Activated T-helper 2 cell treated with anti-CD3 and anti-CD28 coated beads, Interferon-gamma antibody, Interleukin-2, Interleukin-4, amounts not matched to agents 10 μg/mL and 5 μg/mL and 100 μg/mL, durations not matched to agents 14 hours and 24 hours and 36 hours (primary cell): ENCODE measurements at regions of chrX and their contacts with region 1.

Region 1: GRCh38 chrX:136674270-136674985 is 26.5 kb downstream of the CD40LG start:
- DNase-seq: no peak
- H3K4me3 Mint-ChIP-seq: peak overlapping the region; percentile 44
- H3K27ac Mint-ChIP-seq: peak overlapping the region; percentile 95
- H3K4me1 Mint-ChIP-seq: peaks cover 81% of the 10 kb centered on the region
- H3K27me3 Mint-ChIP-seq: no peaks in the 10 kb centered on the region

Region 2: DNA sequence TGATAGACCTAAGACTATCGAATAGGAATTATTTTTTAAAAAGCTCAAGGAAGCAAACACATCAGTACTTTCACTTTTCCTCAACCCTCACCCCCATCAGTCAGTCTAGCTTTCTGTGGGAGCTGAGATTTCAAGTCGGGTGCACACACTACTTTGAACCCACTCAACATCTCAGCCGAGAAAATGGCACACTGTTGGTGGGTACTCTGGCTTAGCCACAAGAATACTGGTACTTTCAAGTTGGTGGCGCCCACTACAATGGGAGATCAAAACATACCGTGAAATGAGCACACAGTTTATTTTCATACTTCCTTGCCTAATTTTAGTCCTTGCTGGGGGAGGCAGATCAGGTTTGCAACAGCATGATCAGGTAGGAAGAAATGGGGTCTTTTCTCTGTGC is 16.3 kb before region 1 on chrX:
- intact Hi-C with region 1: loop called (anchors 1 kb)
- DNase-seq: no peak
- H3K4me3 Mint-ChIP-seq: peak overlapping the region; percentile 75
- H3K27ac Mint-ChIP-seq: peak overlapping the region; percentile 97
- H3K4me1 Mint-ChIP-seq: peaks cover 82% of the 10 kb centered on the region
- H3K27me3 Mint-ChIP-seq: no peaks in the 10 kb centered on the region

Region 3: GRCh38 chrX:136689436-136689835 is 15.0 kb after region 1 on chrX:
- intact Hi-C with region 1: loop called (anchors 1 kb)
- DNase-seq: no peak
- H3K4me3 Mint-ChIP-seq: peak overlapping the region; percentile 23
- H3K27ac Mint-ChIP-seq: peak overlapping the region; percentile 84
- H3K4me1 Mint-ChIP-seq: peaks cover 58% of the 10 kb centered on the region
- H3K27me3 Mint-ChIP-seq: no peaks in the 10 kb centered on the region

Region 4: GRCh38 chrX:136823175-136823574 is 148.7 kb after region 1 on chrX:
- intact Hi-C with region 1: no loop called
- DNase-seq: no peak
- H3K4me3 Mint-ChIP-seq: no peak overlapping the region
- H3K27ac Mint-ChIP-seq: no peak overlapping the region
- H3K4me1 Mint-ChIP-seq: peaks cover 6% of the 10 kb centered on the region
- H3K27me3 Mint-ChIP-seq: no peaks in the 10 kb centered on the region

Region 5: DNA sequence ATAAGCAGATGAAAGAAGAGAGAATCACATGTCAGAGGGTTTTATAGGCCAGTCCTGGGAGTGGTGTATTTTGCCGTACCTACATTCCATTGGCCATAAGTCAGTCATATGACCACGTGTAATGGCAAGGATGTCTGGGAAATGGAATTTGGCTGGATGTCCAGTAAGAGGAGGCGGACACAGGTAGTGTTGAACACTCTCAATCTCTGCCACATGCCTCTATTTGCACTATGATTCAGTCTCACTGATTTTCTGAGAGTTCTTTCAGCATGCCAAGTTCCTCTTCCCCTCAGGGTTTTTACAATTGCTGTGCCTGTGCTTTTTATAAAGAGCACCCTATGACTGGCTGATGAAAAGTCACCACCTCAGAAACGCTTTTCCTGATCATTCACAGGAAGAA is 523.6 kb after region 1 on chrX:
- intact Hi-C with region 1: no loop called
- DNase-seq: no peak
- H3K4me3 Mint-ChIP-seq: no peak overlapping the region
- H3K27ac Mint-ChIP-seq: no peak overlapping the region
- H3K4me1 Mint-ChIP-seq: no peaks in the 10 kb centered on the region
- H3K27me3 Mint-ChIP-seq: peaks cover 5% of the 10 kb centered on the region